H1 (cell line): ENCODE measurements at regions of chr16 and their contacts with region 1.

Region 1: GRCh38 chr16:49350265-49351095 is 23.1 kb upstream of the C16orf78 start:
- DNase-seq: peak in 1 of 2 experiments; percentile 94
- H3K4me3 ChIP-seq: no peak overlapping the region
- H3K27ac ChIP-seq: no peak overlapping the region
- H3K4me1 ChIP-seq: peaks cover 0 to 3% (median 0%) of the 10 kb centered on the region in 4 experiments; a peak in 1 of 7 replicates
- H3K27me3 ChIP-seq: no peaks in the 10 kb centered on the region
- CTCF ChIP-seq: peak; percentile 92 to 93 (median 92)
- EP300 ChIP-seq: no peak
- POLR2A ChIP-seq: no peak
- RAD21 ChIP-seq: peak; percentile 98 to 99

Region 2: GRCh38 chr16:48901712-48902374 is 448.6 kb before region 1 on chr16:
- CTCF ChIA-PET with region 1: interaction called, 19 read pairs
- POLR2A ChIA-PET with region 1: no interaction called
- DNase-seq: no peak
- H3K4me3 ChIP-seq: no peak overlapping the region
- H3K27ac ChIP-seq: no peak overlapping the region
- H3K4me1 ChIP-seq: peaks cover 0 to 3% (median 1%) of the 10 kb centered on the region in 4 experiments; a peak in 2 of 7 replicates
- H3K27me3 ChIP-seq: no peaks in the 10 kb centered on the region; a peak in 1 of 7 replicates
- CTCF ChIP-seq: peak; percentile 39 to 63 (median 45)
- EP300 ChIP-seq: no peak
- POLR2A ChIP-seq: no peak
- RAD21 ChIP-seq: peak; percentile 48 to 49; a peak in 3 of 4 replicates

Region 3: GRCh38 chr16:48932216-48932855 is 418.1 kb before region 1 on chr16:
- CTCF ChIA-PET with region 1: no interaction called
- POLR2A ChIA-PET with region 1: no interaction called
- DNase-seq: no peak
- H3K4me3 ChIP-seq: no peak overlapping the region
- H3K27ac ChIP-seq: no peak overlapping the region
- H3K4me1 ChIP-seq: no peaks in the 10 kb centered on the region
- H3K27me3 ChIP-seq: peaks cover 0 to 2% (median 0%) of the 10 kb centered on the region in 4 experiments; a peak in 2 of 7 replicates
- CTCF ChIP-seq: no peak
- EP300 ChIP-seq: no peak
- POLR2A ChIP-seq: no peak
- RAD21 ChIP-seq: no peak

Region 4: DNA sequence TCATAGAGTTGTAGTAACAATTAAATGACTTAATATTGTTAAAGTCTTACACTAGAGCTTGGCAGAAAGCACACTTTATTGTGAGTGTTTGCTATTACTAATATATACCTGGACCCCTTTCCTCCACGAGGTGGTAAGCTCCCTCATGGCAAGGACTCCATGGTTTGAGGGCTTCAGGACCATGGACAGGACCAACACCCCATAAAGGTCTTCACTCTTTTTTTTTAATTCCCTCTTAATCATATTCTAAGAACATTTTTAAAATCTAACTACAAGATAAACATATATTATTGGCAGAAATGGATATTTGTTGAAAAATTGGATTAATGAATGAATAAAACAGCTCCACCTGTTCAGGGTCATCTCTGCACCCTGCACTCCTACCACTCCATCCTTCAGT is 223.4 kb before region 1 on chr16:
- CTCF ChIA-PET with region 1: interaction called, 17 read pairs
- POLR2A ChIA-PET with region 1: no interaction called
- DNase-seq: no peak
- H3K4me3 ChIP-seq: no peak overlapping the region
- H3K27ac ChIP-seq: no peak overlapping the region
- H3K4me1 ChIP-seq: no peaks in the 10 kb centered on the region
- H3K27me3 ChIP-seq: no peaks in the 10 kb centered on the region
- CTCF ChIP-seq: no peak
- EP300 ChIP-seq: no peak
- POLR2A ChIP-seq: no peak
- RAD21 ChIP-seq: no peak

Region 5: GRCh38 chr16:49281843-49282642 is 68.4 kb before region 1 on chr16:
- CTCF ChIA-PET with region 1: interaction called, 28 read pairs
- POLR2A ChIA-PET with region 1: interaction called, 5 read pairs
- DNase-seq: peak; percentile 54 to 96
- H3K4me3 ChIP-seq: peak overlapping the region; percentile 51 to 71 (median 64)
- H3K27ac ChIP-seq: no peak overlapping the region
- H3K4me1 ChIP-seq: peaks cover 0 to 28% (median 19%) of the 10 kb centered on the region in 4 experiments; a peak in 6 of 7 replicates
- H3K27me3 ChIP-seq: peaks cover 56 to 75% (median 71%) of the 10 kb centered on the region in 4 experiments
- CTCF ChIP-seq: peak; percentile 58 to 80 (median 65)
- EP300 ChIP-seq: no peak
- POLR2A ChIP-seq: no peak
- RAD21 ChIP-seq: peak; percentile 27 to 63; a peak in 3 of 4 replicates

Region 6: GRCh38 chr16:49330562-49331201 is 19.8 kb before region 1 on chr16:
- CTCF ChIA-PET with region 1: interaction called, 67 read pairs
- POLR2A ChIA-PET with region 1: interaction called, 3 read pairs
- DNase-seq: no peak
- H3K4me3 ChIP-seq: no peak overlapping the region
- H3K27ac ChIP-seq: no peak overlapping the region
- H3K4me1 ChIP-seq: peaks cover 0 to 9% (median 4%) of the 10 kb centered on the region in 4 experiments; a peak in 4 of 7 replicates
- H3K27me3 ChIP-seq: no peaks in the 10 kb centered on the region; a peak in 1 of 7 replicates
- CTCF ChIP-seq: peak in 2 of 3 experiments; percentile 1 to 11; a peak in 2 of 4 replicates
- EP300 ChIP-seq: no peak
- POLR2A ChIP-seq: no peak
- RAD21 ChIP-seq: no peak; a peak in 1 of 4 replicates

Region 7: GRCh38 chr16:49377196-49377755 is 26.8 kb after region 1 on chr16:
- CTCF ChIA-PET with region 1: interaction called, 20 read pairs
- POLR2A ChIA-PET with region 1: no interaction called
- DNase-seq: peak in 1 of 2 experiments; percentile 43
- H3K4me3 ChIP-seq: no peak overlapping the region
- H3K27ac ChIP-seq: no peak overlapping the region
- H3K4me1 ChIP-seq: peaks cover 0 to 8% (median 3%) of the 10 kb centered on the region in 4 experiments; a peak in 4 of 7 replicates
- H3K27me3 ChIP-seq: no peaks in the 10 kb centered on the region; a peak in 2 of 7 replicates
- CTCF ChIP-seq: no peak
- EP300 ChIP-seq: no peak
- POLR2A ChIP-seq: no peak
- RAD21 ChIP-seq: no peak

Region 8: GRCh38 chr16:49484451-49484849 is 134.0 kb after region 1 on chr16:
- CTCF ChIA-PET with region 1: no interaction called
- POLR2A ChIA-PET with region 1: no interaction called
- DNase-seq: peak in 1 of 2 experiments; percentile 83
- H3K4me3 ChIP-seq: peak overlapping the region in 1 of 4 experiments; percentile 50; a peak in 2 of 8 replicates
- H3K27ac ChIP-seq: no peak overlapping the region
- H3K4me1 ChIP-seq: peaks cover 0 to 2% (median 0%) of the 10 kb centered on the region in 4 experiments; a peak in 3 of 7 replicates
- H3K27me3 ChIP-seq: no peaks in the 10 kb centered on the region; a peak in 2 of 7 replicates
- CTCF ChIP-seq: no peak
- EP300 ChIP-seq: no peak
- POLR2A ChIP-seq: no peak
- RAD21 ChIP-seq: no peak

Region 9: GRCh38 chr16:49748322-49748721 is 397.8 kb after region 1 on chr16:
- CTCF ChIA-PET with region 1: no interaction called
- POLR2A ChIA-PET with region 1: no interaction called
- DNase-seq: no peak
- H3K4me3 ChIP-seq: no peak overlapping the region
- H3K27ac ChIP-seq: no peak overlapping the region
- H3K4me1 ChIP-seq: peaks cover 4 to 24% (median 17%) of the 10 kb centered on the region in 4 experiments
- H3K27me3 ChIP-seq: no peaks in the 10 kb centered on the region
- CTCF ChIP-seq: no peak
- EP300 ChIP-seq: no peak
- POLR2A ChIP-seq: no peak
- RAD21 ChIP-seq: no peak